ENCODE measurements at regions of chr21 and their contacts with region 1.

Region 1: GRCh38 chr21:42973991-42974831 is at the start of gene PKNOX1:
- H3K4me3 Mint-ChIP-seq: peak within 1 kb of the TSS; percentile 86
- H3K27ac Mint-ChIP-seq: peak within 1 kb of the TSS; percentile 93
- H3K4me1 Mint-ChIP-seq: peaks cover 33% of the 10 kb centered on the region
- H3K27me3 Mint-ChIP-seq: no peaks in the 10 kb centered on the region

Region 2: DNA sequence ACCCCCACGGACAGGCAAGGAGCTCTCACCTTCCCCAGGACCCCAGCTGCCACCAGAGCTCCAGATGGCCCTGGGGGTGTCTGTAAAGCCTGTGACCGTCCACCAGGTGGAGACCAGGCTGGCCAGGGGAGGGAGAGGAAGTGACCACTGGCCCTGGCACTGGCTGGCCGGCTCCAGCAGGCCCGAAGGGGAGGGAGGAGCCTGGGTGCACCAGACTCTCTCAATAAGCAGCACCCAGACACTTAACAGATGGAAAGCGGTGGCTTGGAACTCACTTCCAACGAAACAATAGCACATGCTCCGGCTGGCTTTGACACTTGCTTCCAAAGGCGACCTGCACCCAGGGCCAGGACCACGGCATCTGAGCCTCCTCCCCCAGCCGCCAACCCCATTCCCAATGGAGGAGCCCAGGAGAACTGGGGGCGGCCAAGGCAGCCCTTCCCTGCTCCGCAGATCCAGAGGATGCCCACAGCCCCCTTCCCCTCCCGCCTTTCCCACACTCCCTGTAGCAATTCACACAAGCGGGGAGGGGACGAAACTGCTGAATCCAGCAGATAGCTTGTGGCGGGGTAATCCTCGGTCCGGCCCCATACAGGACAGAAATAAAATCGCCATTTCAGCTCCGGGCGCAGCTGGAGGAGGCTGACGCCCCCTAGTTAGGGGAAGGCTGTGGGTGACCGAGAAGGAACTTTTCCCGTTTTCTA is 321.5 kb before region 1 on chr21:
- intact Hi-C with region 1: no loop called
- H3K4me3 Mint-ChIP-seq: peak overlapping the region; percentile 65
- H3K27ac Mint-ChIP-seq: no peak overlapping the region
- H3K4me1 Mint-ChIP-seq: peaks cover 16% of the 10 kb centered on the region
- H3K27me3 Mint-ChIP-seq: peaks cover 55% of the 10 kb centered on the region

Region 3: DNA sequence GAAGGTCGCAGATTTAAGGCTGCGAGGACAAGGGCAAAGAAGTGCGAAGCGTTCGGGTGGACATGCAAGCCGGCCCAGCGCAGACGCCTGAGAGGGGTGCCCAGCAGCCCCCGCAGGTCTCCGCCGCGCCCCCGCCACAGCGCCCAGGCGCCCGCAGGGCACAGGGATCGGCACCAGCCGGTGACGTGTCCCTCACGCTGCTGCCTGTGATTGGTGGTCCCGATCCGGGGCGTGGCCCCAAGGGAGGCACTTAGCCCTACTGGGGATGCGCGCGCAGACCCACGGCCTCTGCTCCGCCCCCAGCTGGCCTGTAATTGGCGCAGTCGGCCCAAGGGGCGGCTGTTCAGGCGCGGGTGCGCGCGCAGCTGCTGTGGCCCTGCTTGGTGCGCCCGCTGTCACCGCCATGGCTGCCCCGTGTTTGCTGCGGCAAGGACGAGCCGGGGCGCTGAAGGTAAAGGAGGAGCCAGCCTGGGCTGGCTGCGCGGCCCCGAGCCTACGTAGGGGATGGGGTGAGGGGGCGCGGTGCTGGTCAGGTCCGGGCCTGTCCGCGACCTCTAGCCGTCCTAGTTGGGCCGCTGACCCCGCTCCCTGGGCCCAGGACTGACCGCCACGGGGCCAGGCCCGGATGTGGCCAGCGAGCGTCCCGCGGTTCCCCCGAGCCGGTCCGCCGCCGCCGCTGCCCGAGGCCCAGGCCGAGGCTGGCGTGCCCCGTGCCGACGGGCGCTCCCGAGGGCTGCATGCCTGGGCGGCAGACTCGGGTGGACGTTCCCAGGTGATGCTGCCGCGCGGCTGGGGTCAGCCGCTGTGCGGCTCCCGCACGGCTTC is 81.1 kb before region 1 on chr21 and contains the start of gene NDUFV3:
- intact Hi-C with region 1: loop called (anchors 5 kb)
- H3K4me3 Mint-ChIP-seq: peak within 1 kb of the TSS; percentile 80
- H3K27ac Mint-ChIP-seq: peak within 1 kb of the TSS; percentile 98
- H3K4me1 Mint-ChIP-seq: peaks cover 14% of the 10 kb centered on the region
- H3K27me3 Mint-ChIP-seq: no peaks in the 10 kb centered on the region

Region 4: GRCh38 chr21:42923541-42924432 is 50.4 kb before region 1 on chr21:
- intact Hi-C with region 1: loop called (anchors 5 kb)
- H3K4me3 Mint-ChIP-seq: peak overlapping the region; percentile 27
- H3K27ac Mint-ChIP-seq: peak overlapping the region; percentile 60
- H3K4me1 Mint-ChIP-seq: peaks cover 14% of the 10 kb centered on the region
- H3K27me3 Mint-ChIP-seq: no peaks in the 10 kb centered on the region

Measured in dendritic cell treated with granulocyte-macrophage colony-stimulating factor and Interleukin-4, amounts not matched to agents 40 ng/mL and 50 ng/mL, for 4 days (primary cell).